ENCODE measurements at regions of chr11 and their contacts with region 1.

Region 1: DNA sequence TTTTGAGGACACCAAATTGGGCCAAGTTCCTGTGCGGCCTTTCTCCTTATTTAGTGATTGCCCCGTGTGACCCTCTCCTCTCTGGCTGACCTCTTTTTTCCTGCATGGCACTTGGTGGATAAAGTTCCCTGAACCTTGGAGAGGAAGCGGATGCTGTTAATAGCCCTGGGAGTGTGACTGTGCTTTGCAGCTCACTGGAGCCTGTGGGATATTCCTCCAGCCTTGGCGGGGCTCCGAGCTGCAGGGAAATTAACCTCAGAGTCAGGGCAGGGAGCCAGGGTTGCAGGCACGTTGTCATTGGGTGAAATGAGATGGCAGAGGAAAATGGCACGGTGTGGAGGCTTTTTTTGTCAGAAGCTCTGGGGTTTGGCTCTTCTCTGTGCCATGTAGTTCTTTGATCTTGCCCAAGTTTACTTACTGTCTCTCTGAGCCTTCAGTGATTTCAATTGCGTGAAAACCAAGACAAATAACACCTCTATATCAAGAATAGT is 965 bp downstream of the OR9Q1 start:
- DNase-seq: peak; percentile 82
- ATAC-seq: peak; percentile 87

Region 2: GRCh38 chr11:57729479-57729878 is 295.2 kb before region 1 on chr11:
- intact Hi-C with region 1: no loop called
- DNase-seq: no peak
- ATAC-seq: no peak

Region 3: DNA sequence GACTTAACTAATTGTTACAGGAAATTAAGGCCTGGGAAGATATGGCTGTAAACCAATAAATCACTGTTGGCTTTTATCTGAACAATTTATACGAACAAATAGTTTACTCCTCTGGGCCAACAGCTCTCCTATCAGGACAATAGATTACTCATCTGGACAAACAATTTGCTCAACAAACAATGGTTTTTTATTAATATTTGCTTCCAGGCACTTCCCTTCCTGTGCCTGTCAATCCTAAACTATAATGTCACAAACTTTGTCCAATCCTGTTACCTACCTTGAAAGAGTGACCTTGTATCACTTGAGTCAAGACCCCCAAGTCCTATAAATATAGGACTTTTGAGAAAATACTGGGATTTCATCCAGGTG is 88.6 kb before region 1 on chr11:
- intact Hi-C with region 1: loop called (anchors 1 kb)
- DNase-seq: no peak
- ATAC-seq: no peak

Region 4: DNA sequence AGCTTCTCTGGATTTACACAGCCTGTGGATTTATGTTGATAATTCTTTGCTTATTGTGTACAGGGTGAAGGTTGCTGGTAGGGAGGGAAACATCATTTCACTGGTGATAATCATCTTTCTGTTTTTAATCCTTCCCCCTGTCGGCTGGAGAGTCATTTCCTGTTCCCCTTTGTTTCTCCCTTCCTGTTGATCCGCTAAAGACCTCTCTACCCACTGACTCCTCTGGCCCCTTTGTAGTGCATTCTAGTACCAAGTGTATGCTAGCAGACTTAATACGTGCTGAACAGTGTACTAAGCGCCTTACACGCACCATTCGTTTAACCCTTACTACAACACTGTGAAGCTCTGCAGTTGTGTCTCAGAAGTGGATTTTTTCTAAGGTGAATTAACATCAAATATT is 20.0 kb before region 1 on chr11:
- intact Hi-C with region 1: loop called (anchors 2 kb)
- DNase-seq: no peak
- ATAC-seq: no peak

Region 5: DNA sequence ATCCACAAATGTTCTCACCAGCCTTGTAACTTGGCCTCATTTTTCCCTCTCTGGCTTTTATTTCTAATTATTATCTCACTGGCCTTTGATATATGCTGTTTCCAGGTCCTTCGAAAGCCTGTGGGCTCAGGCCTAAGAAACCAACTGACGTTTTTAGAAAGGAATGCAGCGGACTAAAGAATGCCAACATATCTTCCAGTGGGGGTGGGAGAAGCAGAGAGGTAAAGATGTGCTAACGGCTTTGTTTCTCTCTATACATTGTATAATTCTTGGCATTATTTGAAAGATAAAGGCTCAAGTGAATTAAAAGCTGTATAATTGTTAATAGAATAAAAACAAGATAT is 34.3 kb after region 1 on chr11:
- intact Hi-C with region 1: no loop called
- DNase-seq: no peak
- ATAC-seq: peak; percentile 53